IMR-90 (cell line): ENCODE measurements at regions of chr12 and their contacts with region 1.

Region 1: GRCh38 chr12:51590347-51591019 is 550 bp upstream of the SCN8A start:
- DNase-seq: peak; percentile 75
- ATAC-seq: peak; percentile 87
- H3K4me3 ChIP-seq: peak overlapping the region; percentile 67
- H3K27ac ChIP-seq: peak overlapping the region; percentile 39
- H3K4me1 ChIP-seq: no peaks in the 10 kb centered on the region; the same call in 1 of the 2 replicates
- H3K27me3 ChIP-seq: no peaks in the 10 kb centered on the region
- CTCF ChIP-seq: peak; percentile 81
- POLR2A ChIP-seq: no peak
- RAD21 ChIP-seq: peak; percentile 49

Region 2: GRCh38 chr12:51631591-51631990 is 41.1 kb after region 1 on chr12:
- CTCF ChIA-PET with region 1: no interaction called
- POLR2A ChIA-PET with region 1: no interaction called
- dilution Hi-C with region 1: no loop called
- in situ Hi-C with region 1: no loop called
- intact Hi-C with region 1: no loop called
- DNase-seq: peak; percentile 82
- ATAC-seq: peak; percentile 93
- H3K4me3 ChIP-seq: no peak overlapping the region
- H3K27ac ChIP-seq: no peak overlapping the region
- H3K4me1 ChIP-seq: peaks cover 5% of the 10 kb centered on the region; the same call in 1 of the 2 replicates
- H3K27me3 ChIP-seq: no peaks in the 10 kb centered on the region
- CTCF ChIP-seq: no peak
- POLR2A ChIP-seq: no peak
- RAD21 ChIP-seq: no peak

Region 3: GRCh38 chr12:51678086-51678724 is 87.7 kb after region 1 on chr12:
- CTCF ChIA-PET with region 1: no interaction called
- POLR2A ChIA-PET with region 1: no interaction called
- dilution Hi-C with region 1: no loop called
- in situ Hi-C with region 1: no loop called
- intact Hi-C with region 1: loop called (anchors 1 kb)
- DNase-seq: peak; percentile 67
- ATAC-seq: peak; percentile 94
- H3K4me3 ChIP-seq: no peak overlapping the region
- H3K27ac ChIP-seq: no peak overlapping the region
- H3K4me1 ChIP-seq: no peaks in the 10 kb centered on the region
- H3K27me3 ChIP-seq: no peaks in the 10 kb centered on the region
- CTCF ChIP-seq: peak; percentile 68
- POLR2A ChIP-seq: no peak
- RAD21 ChIP-seq: peak; percentile 73

Region 4: DNA sequence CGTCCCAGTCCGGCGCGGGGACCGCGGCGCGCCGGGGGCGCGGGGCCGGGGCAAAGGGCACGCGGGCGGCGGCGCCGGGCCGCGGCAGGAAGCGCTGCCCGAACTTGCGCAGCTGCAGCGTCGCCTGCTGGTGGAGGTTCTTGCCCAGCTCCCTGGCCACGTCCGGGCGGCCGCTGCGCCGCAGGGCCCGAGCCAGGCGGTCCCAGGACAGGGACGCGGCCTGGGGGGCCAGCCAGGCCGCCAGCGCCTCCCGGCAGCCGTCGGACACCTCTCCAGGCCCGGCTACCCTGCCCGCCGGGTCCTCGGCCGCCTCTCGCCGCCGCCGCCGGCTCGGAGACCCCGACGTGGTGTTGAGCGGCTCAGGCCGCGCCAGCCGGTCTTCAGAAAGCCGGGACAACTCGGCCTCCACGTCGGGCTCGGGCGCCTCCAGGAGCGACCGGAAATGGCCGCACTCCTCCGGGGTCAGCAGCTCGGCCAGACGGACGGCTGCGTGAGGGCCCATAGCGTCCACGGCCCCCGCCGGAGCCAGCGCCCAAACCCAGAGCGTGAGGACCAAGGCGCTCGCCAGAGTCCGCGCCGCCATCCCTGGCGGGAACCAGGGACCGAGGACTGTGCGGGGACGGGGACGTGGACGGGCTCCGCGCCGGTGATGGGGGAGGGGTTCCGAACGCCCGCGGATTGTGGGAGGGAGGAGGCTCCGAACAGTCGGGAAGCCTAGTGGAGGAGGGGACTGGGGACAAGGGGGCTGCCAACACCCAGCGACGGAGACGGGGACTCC is 224.0 kb after region 1 on chr12:
- CTCF ChIA-PET with region 1: no interaction called
- POLR2A ChIA-PET with region 1: no interaction called
- dilution Hi-C with region 1: no loop called
- in situ Hi-C with region 1: no loop called
- intact Hi-C with region 1: loop called (anchors 5 kb)
- DNase-seq: peak; percentile 66
- ATAC-seq: peak; percentile 88
- H3K4me3 ChIP-seq: peak overlapping the region; percentile 54
- H3K27ac ChIP-seq: no peak overlapping the region; the same call in 1 of the 2 replicates
- H3K4me1 ChIP-seq: peaks cover 8% of the 10 kb centered on the region; the same call in 1 of the 2 replicates
- H3K27me3 ChIP-seq: no peaks in the 10 kb centered on the region; the same call in 1 of the 2 replicates
- CTCF ChIP-seq: peak; percentile 70
- POLR2A ChIP-seq: no peak
- RAD21 ChIP-seq: peak; percentile 72